ENCODE measurements at regions of chr5 and their contacts with region 1.

Region 1: DNA sequence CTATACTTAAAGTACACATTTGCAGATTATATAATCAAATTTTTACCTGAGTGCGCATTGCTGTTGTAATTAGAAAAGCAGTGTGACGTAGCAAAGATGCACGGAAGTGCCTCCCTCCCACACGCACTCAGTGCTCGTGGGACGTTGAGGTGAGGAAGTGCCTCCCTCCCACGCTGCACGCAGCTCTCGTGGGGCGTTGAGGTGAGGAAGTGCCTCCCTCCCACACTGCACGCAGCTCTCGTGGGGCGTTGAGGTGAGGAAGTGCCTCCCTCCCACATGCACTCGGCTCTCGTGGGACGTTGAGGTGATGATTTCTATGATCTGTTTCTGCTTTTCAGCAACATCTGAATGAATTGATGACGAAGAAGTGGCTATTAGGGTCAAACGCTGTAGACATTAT is 21.0 kb downstream of the EXOC3 start:
- DNase-seq: peak; percentile 51 to 87 (median 78)
- H3K4me3 ChIP-seq: peak overlapping the region; percentile 19
- H3K4me3 Mint-ChIP-seq: peak overlapping the region; percentile 12 to 84 (median 55)
- H3K27ac ChIP-seq: no peak overlapping the region
- H3K27ac Mint-ChIP-seq: peak overlapping the region; percentile 75 to 93 (median 88)
- H3K4me1 ChIP-seq: peaks cover 17% of the 10 kb centered on the region
- H3K4me1 Mint-ChIP-seq: peaks cover 8 to 23% (median 10%) of the 10 kb centered on the region in 3 donors
- H3K27me3 ChIP-seq: no peaks in the 10 kb centered on the region
- H3K27me3 Mint-ChIP-seq: no peaks in the 10 kb centered on the region

Region 2: DNA sequence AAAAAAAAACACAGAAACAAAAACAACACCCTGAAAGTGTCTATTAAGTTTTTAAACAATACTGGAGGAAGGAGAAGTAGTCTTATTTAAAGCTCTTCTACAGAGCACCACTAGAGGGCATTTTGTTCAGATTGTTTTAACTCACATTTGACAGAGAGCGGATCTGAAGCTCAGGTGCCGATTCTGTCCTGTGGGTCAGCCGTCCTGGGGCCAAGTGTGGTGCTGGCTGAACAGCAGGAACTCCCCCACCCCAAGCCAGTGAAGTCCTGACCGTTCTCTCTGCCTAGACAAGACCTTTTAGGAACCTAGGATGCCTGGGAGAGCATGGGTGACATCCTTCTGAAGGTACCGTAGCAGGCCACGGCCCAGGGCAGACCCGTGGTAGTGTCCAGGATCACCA is 17.1 kb before region 1 on chr5:
- CTCF ChIA-PET with region 1: interaction called, 15 read pairs
- POLR2A ChIA-PET with region 1: no interaction called
- DNase-seq: peak in 3 of 5 donors; percentile 14 to 36 (median 30)
- H3K4me3 ChIP-seq: no peak overlapping the region
- H3K4me3 Mint-ChIP-seq: peak overlapping the region in 2 of 7 donors; percentile 20 to 89
- H3K27ac ChIP-seq: no peak overlapping the region
- H3K27ac Mint-ChIP-seq: peak overlapping the region in 6 of 8 donors; percentile 42 to 90 (median 68)
- H3K4me1 ChIP-seq: peaks cover 23% of the 10 kb centered on the region
- H3K4me1 Mint-ChIP-seq: peaks cover 39 to 67% (median 53%) of the 10 kb centered on the region in 3 donors
- H3K27me3 ChIP-seq: no peaks in the 10 kb centered on the region
- H3K27me3 Mint-ChIP-seq: no peaks in the 10 kb centered on the region